ENCODE measurements at regions of chr16 and their contacts with region 1.

Region 1: GRCh38 chr16:48603647-48604376 is 6.2 kb downstream of the N4BP1 start:
- DNase-seq: no peak
- ATAC-seq: no peak
- H3K4me3 ChIP-seq: no peak overlapping the region
- H3K4me3 Mint-ChIP-seq: peak overlapping the region; percentile 2
- H3K27ac ChIP-seq: peak overlapping the region in 1 of 2 experiments; percentile 8
- H3K27ac Mint-ChIP-seq: peak overlapping the region; percentile 20
- H3K4me1 ChIP-seq: peaks cover 82% of the 10 kb centered on the region
- H3K4me1 Mint-ChIP-seq: peaks cover 49% of the 10 kb centered on the region
- H3K27me3 ChIP-seq: no peaks in the 10 kb centered on the region
- H3K27me3 Mint-ChIP-seq: no peaks in the 10 kb centered on the region
- CTCF ChIP-seq: no peak

Region 2: GRCh38 chr16:48583075-48584065 is 20.4 kb before region 1 on chr16:
- CTCF ChIA-PET with region 1: no interaction called
- POLR2A ChIA-PET with region 1: no interaction called
- intact Hi-C with region 1: loop called in 1 of 2 experiments (anchors 2 kb)
- DNase-seq: no peak
- ATAC-seq: no peak
- H3K4me3 ChIP-seq: no peak overlapping the region
- H3K4me3 Mint-ChIP-seq: no peak overlapping the region
- H3K27ac ChIP-seq: no peak overlapping the region
- H3K27ac Mint-ChIP-seq: peak overlapping the region; percentile 34
- H3K4me1 ChIP-seq: peaks cover 6% of the 10 kb centered on the region
- H3K4me1 Mint-ChIP-seq: peaks cover 48% of the 10 kb centered on the region
- H3K27me3 ChIP-seq: no peaks in the 10 kb centered on the region
- H3K27me3 Mint-ChIP-seq: no peaks in the 10 kb centered on the region
- CTCF ChIP-seq: no peak

Measured in CD8-positive, alpha-beta T cell (primary cell).